Panc1 (cell line): ENCODE measurements at regions of chr7 and their contacts with region 1.

Region 1: GRCh38 chr7:66033471-66034385 is 41.9 kb upstream of the ASL start:
- DNase-seq: no peak
- ATAC-seq: no peak
- H3K4me3 ChIP-seq: no peak overlapping the region
- H3K27ac ChIP-seq: no peak overlapping the region
- H3K4me1 ChIP-seq: no peaks in the 10 kb centered on the region
- H3K27me3 ChIP-seq: no peaks in the 10 kb centered on the region
- CTCF ChIP-seq: no peak

Region 2: DNA sequence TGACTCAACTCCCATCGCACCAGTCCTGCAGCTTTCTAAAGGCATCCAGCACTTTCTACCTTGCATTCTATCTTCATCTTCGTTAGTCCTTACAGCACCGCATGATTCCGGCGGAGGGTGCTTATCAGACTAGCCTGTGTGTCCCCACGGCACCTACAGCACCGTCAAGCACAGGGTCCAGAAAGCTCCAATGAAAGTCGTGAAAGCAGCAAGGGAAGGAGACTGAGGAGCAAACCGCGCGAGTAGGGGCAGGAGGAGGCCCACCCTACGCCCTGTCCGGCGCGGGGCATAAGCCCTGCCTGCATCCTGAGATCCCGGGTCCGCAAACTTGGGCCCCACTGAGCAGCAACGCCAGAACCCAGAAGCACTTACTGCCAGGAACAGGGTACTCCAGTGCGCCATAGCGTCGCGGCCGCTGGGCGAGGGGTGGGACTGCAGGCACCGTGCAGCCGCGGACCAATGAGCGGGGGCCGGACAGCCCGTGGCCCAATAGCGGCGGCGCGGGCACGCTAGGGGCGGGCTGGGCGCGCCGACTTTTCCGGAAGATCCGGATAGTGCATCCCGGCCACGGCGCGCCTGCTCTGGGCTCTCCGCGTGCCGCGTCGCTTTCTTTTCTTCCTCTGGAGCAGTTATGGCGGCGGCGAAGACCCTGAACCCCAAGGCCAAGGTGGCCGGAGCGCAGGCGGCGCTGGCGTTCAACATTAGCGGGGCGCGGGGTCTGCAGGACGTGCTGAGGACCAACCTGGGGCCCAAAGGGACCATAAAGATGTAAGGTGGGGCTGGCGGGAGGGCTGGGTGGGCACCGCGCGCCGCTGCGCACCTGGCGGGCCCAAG is 283.0 kb before region 1 on chr7:
- CTCF ChIA-PET with region 1: no interaction called
- POLR2A ChIA-PET with region 1: no interaction called
- in situ Hi-C with region 1: no loop called
- intact Hi-C with region 1: no loop called
- DNase-seq: peak; percentile 65
- ATAC-seq: peak; percentile 100
- H3K4me3 ChIP-seq: peak overlapping the region; percentile 95 to 100
- H3K27ac ChIP-seq: peak overlapping the region; percentile 91
- H3K4me1 ChIP-seq: no peaks in the 10 kb centered on the region
- H3K27me3 ChIP-seq: no peaks in the 10 kb centered on the region
- CTCF ChIP-seq: no peak

Region 3: DNA sequence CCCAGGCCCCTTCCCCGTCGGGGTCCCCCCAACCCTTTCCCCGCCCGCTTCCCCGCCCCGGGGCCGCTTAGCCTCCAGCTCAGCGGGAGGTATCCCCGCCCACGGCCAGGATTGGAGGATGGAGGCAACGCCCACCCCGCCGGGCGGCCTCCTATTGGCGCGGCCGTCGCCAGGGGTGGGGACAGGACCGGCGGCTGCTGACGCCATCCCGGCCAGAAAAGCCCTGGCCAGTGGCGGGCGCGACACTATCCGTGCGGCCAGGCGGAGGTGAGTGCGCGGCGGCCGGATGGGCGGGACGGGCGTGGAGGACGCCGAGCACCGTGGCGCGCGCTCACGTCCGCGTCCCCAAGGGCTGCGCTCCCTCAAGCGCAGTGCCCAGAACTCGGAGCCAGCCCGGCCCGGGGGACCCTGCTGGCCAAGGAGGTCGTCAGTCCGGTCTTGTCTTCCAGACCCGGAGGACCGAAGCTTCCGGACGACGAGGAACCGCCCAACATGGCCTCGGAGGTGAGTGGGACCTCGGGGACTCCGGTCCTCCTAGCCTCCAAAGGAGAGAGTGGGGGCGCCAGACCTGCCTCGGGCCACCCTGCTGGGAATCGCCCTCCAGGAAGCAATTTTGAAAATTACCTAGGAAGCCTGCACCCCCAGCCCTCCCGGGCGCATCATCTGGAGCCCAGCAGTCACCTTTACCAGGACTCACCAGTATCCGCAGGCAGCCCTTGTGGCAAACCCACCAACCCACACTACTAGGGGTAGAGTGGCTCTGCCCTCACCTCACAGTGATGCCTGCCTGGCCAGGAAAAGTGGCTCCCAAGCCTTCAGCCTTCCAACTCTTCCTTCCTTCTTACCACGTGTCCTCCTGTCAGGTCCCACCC is 42.1 kb after region 1 on chr7 and contains the start of gene ASL:
- CTCF ChIA-PET with region 1: interaction called, 11 read pairs
- POLR2A ChIA-PET with region 1: no interaction called
- in situ Hi-C with region 1: no loop called
- intact Hi-C with region 1: no loop called
- DNase-seq: no peak
- ATAC-seq: peak; percentile 100
- H3K4me3 ChIP-seq: peak within 1 kb of the TSS; percentile 67 to 92
- H3K27ac ChIP-seq: peak within 1 kb of the TSS; percentile 84
- H3K4me1 ChIP-seq: peaks cover 7% of the 10 kb centered on the region
- H3K27me3 ChIP-seq: no peaks in the 10 kb centered on the region
- CTCF ChIP-seq: no peak
- total RNA-seq, gene ASL: 34.3 TPM

Region 4: GRCh38 chr7:66125052-66125708 is 91.5 kb after region 1 on chr7:
- CTCF ChIA-PET with region 1: no interaction called
- POLR2A ChIA-PET with region 1: no interaction called
- in situ Hi-C with region 1: no loop called
- intact Hi-C with region 1: loop called (anchors 10 kb)
- DNase-seq: no peak
- ATAC-seq: no peak
- H3K4me3 ChIP-seq: no peak overlapping the region
- H3K27ac ChIP-seq: no peak overlapping the region
- H3K4me1 ChIP-seq: peaks cover 15% of the 10 kb centered on the region
- H3K27me3 ChIP-seq: no peaks in the 10 kb centered on the region
- CTCF ChIP-seq: no peak

Region 5: DNA sequence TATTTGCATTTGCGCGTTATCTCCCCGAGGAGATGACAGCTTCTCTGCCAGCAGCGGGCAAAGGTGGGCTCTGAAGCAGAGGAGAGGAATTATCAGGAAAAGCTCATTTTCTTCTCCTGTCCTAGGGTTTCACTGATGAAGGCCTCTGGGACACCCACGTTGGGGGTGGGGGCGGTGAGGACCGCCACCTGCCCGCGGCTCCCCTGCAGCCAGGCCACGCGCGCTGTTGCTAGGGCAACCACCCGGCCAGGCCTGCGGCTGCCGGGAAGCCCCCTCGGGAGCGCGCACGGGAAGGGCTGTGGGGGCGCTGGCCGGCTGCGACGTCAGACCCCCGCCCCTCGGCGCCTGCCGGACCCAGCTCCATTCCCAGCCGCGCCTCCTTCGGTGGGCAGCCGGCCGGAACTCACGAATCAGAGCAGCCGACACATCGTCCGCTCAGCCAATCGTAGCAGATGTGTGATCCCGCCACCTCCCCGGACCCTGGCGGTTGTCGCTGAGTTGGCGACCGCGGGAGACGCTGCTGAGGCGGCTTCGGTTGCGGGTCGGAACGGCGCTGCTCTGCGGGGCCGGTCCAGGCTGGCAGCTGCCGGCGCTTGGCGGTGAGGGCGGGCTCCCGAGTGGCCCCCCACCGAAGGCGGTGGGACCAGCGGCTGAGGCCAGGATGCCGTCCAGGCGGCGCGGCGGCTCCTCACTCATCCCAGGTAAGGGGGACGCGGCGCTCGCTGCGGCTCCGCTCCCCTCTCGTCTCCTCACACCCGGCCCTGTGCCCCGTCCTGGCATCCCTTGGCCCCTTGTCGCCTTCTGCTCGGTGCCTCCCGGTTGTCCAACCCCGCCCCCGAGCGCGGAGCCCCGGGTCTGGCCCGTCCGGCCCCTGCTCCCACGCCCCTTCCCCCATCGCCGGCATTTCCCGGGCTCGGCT is 171.4 kb after region 1 on chr7 and contains the start of gene TPST1:
- CTCF ChIA-PET with region 1: interaction called, 11 read pairs
- POLR2A ChIA-PET with region 1: no interaction called
- in situ Hi-C with region 1: no loop called
- intact Hi-C with region 1: no loop called
- DNase-seq: peak; percentile 69
- ATAC-seq: peak; percentile 98
- H3K4me3 ChIP-seq: peak within 1 kb of the TSS; percentile 57 to 80
- H3K27ac ChIP-seq: peak within 1 kb of the TSS; percentile 78
- H3K4me1 ChIP-seq: peaks cover 17% of the 10 kb centered on the region
- H3K27me3 ChIP-seq: no peaks in the 10 kb centered on the region
- CTCF ChIP-seq: peak; percentile 82; the same call in 1 of the 2 replicates
- total RNA-seq, gene TPST1: 29.0 TPM

Region 6: GRCh38 chr7:66654123-66654732 is 620.5 kb after region 1 on chr7:
- CTCF ChIA-PET with region 1: no interaction called
- POLR2A ChIA-PET with region 1: interaction called, 12 read pairs
- in situ Hi-C with region 1: no loop called
- intact Hi-C with region 1: no loop called
- DNase-seq: peak; percentile 90
- ATAC-seq: peak; percentile 97
- H3K4me3 ChIP-seq: peak overlapping the region; percentile 72 to 92
- H3K27ac ChIP-seq: peak overlapping the region; percentile 93
- H3K4me1 ChIP-seq: 0 out of 2 replicates have a peak, but pooled peaks cover 2% of the 10 kb centered on the region
- H3K27me3 ChIP-seq: no peaks in the 10 kb centered on the region
- CTCF ChIP-seq: no peak